Activated CD8-positive, alpha-beta T cell treated with anti-CD3 and anti-CD28 coated beads for 36 hours (primary cell): ENCODE measurements at regions of chr1 and their contacts with region 1.

Region 1: GRCh38 chr1:85259118-85259911 is at the start of gene C1orf52:
- DNase-seq: peak; percentile 98
- ATAC-seq: peak; percentile 99
- H3K4me3 Mint-ChIP-seq: peak within 1 kb of the TSS; percentile 87
- H3K27ac Mint-ChIP-seq: peak within 1 kb of the TSS; percentile 96
- H3K4me1 Mint-ChIP-seq: peaks cover 36% of the 10 kb centered on the region
- H3K27me3 Mint-ChIP-seq: no peaks in the 10 kb centered on the region
- CTCF ChIP-seq: peak; percentile 93
- total RNA-seq, gene C1orf52: 26.8 to 35.7 TPM

Region 2: GRCh38 chr1:85033221-85033620 is 226.1 kb before region 1 on chr1:
- CTCF ChIA-PET with region 1: interaction called, 11 read pairs
- POLR2A ChIA-PET with region 1: no interaction called
- intact Hi-C with region 1: no loop called
- DNase-seq: no peak
- ATAC-seq: no peak
- H3K4me3 Mint-ChIP-seq: no peak overlapping the region
- H3K27ac Mint-ChIP-seq: no peak overlapping the region
- H3K4me1 Mint-ChIP-seq: no peaks in the 10 kb centered on the region
- H3K27me3 Mint-ChIP-seq: peaks cover 3% of the 10 kb centered on the region
- CTCF ChIP-seq: no peak

Region 3: DNA sequence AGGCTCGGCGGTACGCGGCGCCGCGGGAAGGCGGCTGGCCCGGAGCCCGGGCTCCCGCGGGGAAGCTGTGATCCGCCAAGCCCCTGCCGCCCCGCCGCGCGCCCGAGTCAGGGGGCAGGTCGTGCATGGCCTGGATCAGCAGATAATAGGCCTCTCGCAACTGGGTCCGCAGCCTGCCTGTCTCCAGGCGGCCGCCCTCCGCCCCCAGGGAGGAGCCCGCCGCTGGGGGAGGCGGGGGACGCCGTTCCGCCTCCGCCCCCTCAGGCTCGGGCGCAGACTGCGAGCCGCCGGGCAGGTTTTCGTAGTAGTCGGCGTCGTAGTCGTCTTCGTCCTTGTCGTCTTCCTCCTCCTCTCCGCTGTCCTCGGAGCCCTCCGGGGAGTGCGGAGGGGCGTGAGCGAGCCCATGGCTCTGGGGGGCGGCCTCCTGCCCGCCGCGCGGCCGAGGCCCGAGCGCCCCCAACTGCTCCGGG is 58.4 kb before region 1 on chr1 and contains the start of gene SYDE2:
- CTCF ChIA-PET with region 1: interaction called, 11 read pairs
- POLR2A ChIA-PET with region 1: interaction called, 5 read pairs
- intact Hi-C with region 1: no loop called
- DNase-seq: peak; percentile 73
- ATAC-seq: peak; percentile 82
- H3K4me3 Mint-ChIP-seq: peak within 1 kb of the TSS; percentile 92
- H3K27ac Mint-ChIP-seq: peak within 1 kb of the TSS; percentile 91
- H3K4me1 Mint-ChIP-seq: peaks cover 23% of the 10 kb centered on the region
- H3K27me3 Mint-ChIP-seq: no peaks in the 10 kb centered on the region
- CTCF ChIP-seq: no peak
- total RNA-seq, gene SYDE2: 4.8 to 5.2 TPM

Region 4: DNA sequence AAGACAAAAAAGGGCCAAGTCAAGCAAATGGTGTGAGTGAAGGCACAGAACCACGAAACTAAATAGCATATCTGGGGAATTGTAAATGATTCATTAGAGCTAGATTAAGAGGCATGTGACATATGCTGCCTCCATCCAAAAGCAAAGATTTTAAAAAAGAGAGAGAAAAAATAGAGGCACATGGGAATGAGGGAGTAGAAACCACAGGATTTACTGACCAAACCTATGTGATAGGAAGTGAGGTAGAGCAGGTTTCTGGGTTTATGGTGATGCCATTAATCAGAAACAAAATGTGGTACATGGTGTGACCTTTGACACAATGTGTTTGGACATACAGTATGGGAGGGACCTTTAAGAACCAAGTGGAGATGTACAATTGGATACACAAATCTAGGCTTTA is 13.4 kb before region 1 on chr1:
- CTCF ChIA-PET with region 1: interaction called, 33 read pairs
- POLR2A ChIA-PET with region 1: no interaction called
- intact Hi-C with region 1: no loop called
- DNase-seq: no peak
- ATAC-seq: no peak
- H3K4me3 Mint-ChIP-seq: no peak overlapping the region
- H3K27ac Mint-ChIP-seq: no peak overlapping the region
- H3K4me1 Mint-ChIP-seq: peaks cover 7% of the 10 kb centered on the region
- H3K27me3 Mint-ChIP-seq: no peaks in the 10 kb centered on the region
- CTCF ChIP-seq: no peak